ENCODE measurements at regions of chr20 and their contacts with region 1.

Region 1: DNA sequence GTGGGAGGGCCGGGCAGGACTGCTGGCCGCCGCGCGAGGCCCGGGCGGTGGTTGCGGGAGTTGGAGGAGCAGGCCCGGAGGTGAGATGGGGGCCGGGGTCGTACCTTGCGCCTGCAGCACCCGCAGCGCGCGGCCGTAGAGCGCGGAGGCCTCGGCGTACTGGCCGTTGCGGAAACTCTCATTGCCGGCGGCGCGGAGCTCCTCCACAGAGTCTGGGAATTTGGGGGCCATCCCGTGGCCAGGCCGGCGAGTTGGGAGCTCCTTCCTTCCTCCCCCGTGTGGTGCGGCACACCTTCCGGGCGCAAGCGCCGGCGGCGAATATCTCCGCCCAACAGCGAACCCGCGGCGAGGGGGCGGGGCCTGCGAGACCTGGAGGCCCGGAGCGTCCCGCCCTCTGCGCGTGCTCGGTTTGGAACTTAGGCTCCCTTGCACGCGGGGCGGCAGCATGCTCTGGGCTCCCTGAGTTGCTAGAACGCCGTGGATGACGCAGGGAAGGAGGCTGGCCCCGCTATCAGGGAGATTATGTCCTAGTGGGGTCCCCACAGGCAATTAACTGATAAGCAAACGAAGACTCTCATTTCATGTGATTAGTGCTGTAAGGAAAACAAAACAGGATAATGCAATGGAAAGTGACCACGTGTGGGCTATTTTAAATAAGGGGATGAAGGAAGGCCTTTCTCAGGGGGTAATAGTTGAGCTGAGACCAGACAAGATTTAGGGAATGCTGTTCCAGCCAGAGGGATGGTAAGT is at the start of gene TOMM34:
- DNase-seq: peak; percentile 94
- ATAC-seq: peak; percentile 96
- H3K4me3 ChIP-seq: peak within 1 kb of the TSS; percentile 83 to 94 (median 90)
- H3K27ac ChIP-seq: peak within 1 kb of the TSS; percentile 66
- H3K4me1 ChIP-seq: peaks cover 61% of the 10 kb centered on the region
- H3K27me3 ChIP-seq: no peaks in the 10 kb centered on the region
- CTCF ChIP-seq: peak; percentile 53
- EP300 ChIP-seq: no peak
- POLR2A ChIP-seq: peak; percentile 90 to 97
- RAD21 ChIP-seq: no peak; the same call in none of the 2 replicates
- total RNA-seq, gene TOMM34: 52.0 and 73.0 TPM in 2 replicates

Region 2: GRCh38 chr20:44942264-44942973 is 17.9 kb before region 1 on chr20:
- CTCF ChIA-PET with region 1: no interaction called
- POLR2A ChIA-PET with region 1: interaction called, 51 read pairs
- in situ Hi-C with region 1: no loop called
- intact Hi-C with region 1: no loop called
- DNase-seq: peak; percentile 21
- ATAC-seq: peak; percentile 75
- H3K4me3 ChIP-seq: no peak overlapping the region
- H3K27ac ChIP-seq: no peak overlapping the region
- H3K4me1 ChIP-seq: peaks cover 16% of the 10 kb centered on the region
- H3K27me3 ChIP-seq: no peaks in the 10 kb centered on the region
- CTCF ChIP-seq: peak; percentile 47; the same call in 1 of the 2 replicates
- EP300 ChIP-seq: no peak
- POLR2A ChIP-seq: 0 out of 4 replicates have a peak, but pooled peaks of 1 of the 2 experiments have one; percentile 38
- RAD21 ChIP-seq: no peak

Region 3: DNA sequence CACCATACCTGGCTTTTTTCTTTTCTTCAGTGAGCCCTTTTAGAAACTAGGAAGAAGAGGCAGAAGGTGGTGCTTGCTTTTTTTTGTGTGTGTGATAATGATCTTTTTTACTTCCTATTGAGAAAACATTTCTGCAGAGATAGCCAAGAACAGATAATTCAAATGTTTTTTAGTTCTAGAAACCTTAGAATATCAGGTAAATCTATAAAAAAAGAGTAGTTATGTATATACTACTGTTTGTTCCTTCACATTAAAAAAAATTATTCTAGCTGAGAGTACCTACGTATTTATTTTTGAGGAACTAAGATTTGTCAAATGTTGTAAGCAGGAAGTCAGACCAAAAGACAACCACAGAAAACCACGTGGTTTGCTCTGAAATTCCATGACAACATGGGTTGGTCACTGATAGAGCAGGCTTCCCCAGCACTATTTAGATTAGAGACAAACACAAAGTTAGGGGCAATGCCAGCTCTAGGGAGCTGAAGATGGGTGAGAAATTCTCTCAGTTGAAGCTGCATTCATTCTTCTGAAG is 18.9 kb after region 1 on chr20:
- CTCF ChIA-PET with region 1: no interaction called
- POLR2A ChIA-PET with region 1: interaction called, 10 read pairs
- in situ Hi-C with region 1: no loop called
- intact Hi-C with region 1: no loop called
- DNase-seq: no peak
- ATAC-seq: no peak
- H3K4me3 ChIP-seq: no peak overlapping the region
- H3K27ac ChIP-seq: no peak overlapping the region
- H3K4me1 ChIP-seq: no peaks in the 10 kb centered on the region
- H3K27me3 ChIP-seq: no peaks in the 10 kb centered on the region
- CTCF ChIP-seq: no peak
- EP300 ChIP-seq: no peak
- POLR2A ChIP-seq: no peak
- RAD21 ChIP-seq: no peak

Measured in HepG2 (cell line).